ENCODE measurements at regions of chr1 and their contacts with region 1.

Region 1: DNA sequence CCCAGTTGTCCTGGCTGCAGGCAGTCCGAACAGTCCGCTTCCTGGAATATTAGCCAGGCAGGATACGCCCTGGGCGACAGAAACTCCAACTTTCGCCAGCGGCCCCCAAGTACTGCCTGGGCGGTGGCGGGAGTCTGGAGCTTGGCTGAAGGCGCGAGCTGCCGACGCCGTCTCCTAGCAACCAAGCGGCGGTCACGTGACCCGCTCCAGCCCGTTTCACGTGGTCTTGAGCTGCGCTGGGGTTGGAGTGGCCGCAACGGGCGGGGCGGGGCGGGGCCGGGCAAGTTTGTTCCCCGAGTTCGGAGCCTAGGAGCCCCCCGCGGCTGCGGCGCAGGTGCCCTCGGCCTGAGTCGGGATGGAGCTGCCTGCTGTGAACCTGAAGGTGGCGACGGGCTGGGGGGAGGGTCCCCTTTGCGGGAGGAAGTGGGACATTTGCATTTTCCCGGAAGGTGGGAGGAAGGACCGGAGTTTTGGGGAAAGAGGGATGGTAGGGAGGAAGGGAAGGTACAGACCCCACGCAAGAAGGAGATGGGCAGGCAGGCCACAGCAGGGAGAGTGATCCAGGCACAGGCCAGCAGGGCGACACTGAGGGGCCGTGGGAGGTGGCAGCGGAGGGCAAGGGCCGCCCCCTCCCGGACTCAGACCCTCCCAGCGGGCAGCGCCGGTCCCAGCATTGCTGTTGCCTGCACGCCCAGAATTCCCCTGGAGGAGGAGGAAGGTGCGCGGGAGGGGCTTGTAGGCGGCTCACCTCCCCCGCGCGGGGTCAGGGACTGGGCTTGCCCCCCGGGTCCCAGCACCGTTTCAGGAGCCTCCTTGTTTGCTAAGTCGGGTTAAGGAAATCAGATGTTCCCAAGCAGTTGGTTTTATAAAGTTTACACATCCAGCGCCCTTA is at the start of gene AGTRAP:
- DNase-seq: peak; percentile 95 to 99 (median 96)
- ATAC-seq: peak; percentile 84
- H3K4me3 ChIP-seq: peak within 1 kb of the TSS; percentile 69
- H3K27ac ChIP-seq: peak within 1 kb of the TSS; percentile 91
- H3K4me1 ChIP-seq: peaks cover 49 to 50% of the 10 kb centered on the region in 2 experiments
- H3K27me3 ChIP-seq: no peaks in the 10 kb centered on the region
- CTCF ChIP-seq: peak; percentile 13 to 19 (median 18); a peak in 2 of 6 replicates
- EP300 ChIP-seq: peak; percentile 27; the same call in 1 of the 2 replicates
- POLR2A ChIP-seq: peak; percentile 81
- RAD21 ChIP-seq: no peak
- polyA plus RNA-seq, gene AGTRAP: 31.4 to 51.5 TPM

Region 2: GRCh38 chr1:11749203-11749689 is 13.1 kb after region 1 on chr1:
- CTCF ChIA-PET with region 1: no interaction called
- POLR2A ChIA-PET with region 1: interaction called, 13 read pairs
- in situ Hi-C with region 1: no loop called
- intact Hi-C with region 1: no loop called
- DNase-seq: peak; percentile 87 to 94 (median 92)
- ATAC-seq: peak; percentile 94
- H3K4me3 ChIP-seq: no peak overlapping the region
- H3K27ac ChIP-seq: no peak overlapping the region
- H3K4me1 ChIP-seq: peaks cover 29 to 60% of the 10 kb centered on the region in 2 experiments
- H3K27me3 ChIP-seq: no peaks in the 10 kb centered on the region
- CTCF ChIP-seq: peak; percentile 92 to 98 (median 96)
- EP300 ChIP-seq: no peak
- POLR2A ChIP-seq: no peak
- RAD21 ChIP-seq: peak; percentile 94 to 96

Region 3: GRCh38 chr1:11797525-11798216 is 61.6 kb after region 1 on chr1:
- CTCF ChIA-PET with region 1: no interaction called
- POLR2A ChIA-PET with region 1: interaction called, 16 read pairs
- in situ Hi-C with region 1: no loop called
- intact Hi-C with region 1: loop called (anchors 5 kb)
- DNase-seq: peak; percentile 84 to 98 (median 88)
- ATAC-seq: peak; percentile 76
- H3K4me3 ChIP-seq: peak overlapping the region; percentile 0; the same call in 1 of the 2 replicates
- H3K27ac ChIP-seq: peak overlapping the region; percentile 100
- H3K4me1 ChIP-seq: peaks cover 67 to 71% of the 10 kb centered on the region in 2 experiments
- H3K27me3 ChIP-seq: no peaks in the 10 kb centered on the region
- CTCF ChIP-seq: no peak
- EP300 ChIP-seq: peak; percentile 99
- POLR2A ChIP-seq: no peak; the same call in none of the 2 replicates
- RAD21 ChIP-seq: peak; percentile 4 to 35; a peak in 2 of 4 replicates

Measured in K562 (cell line).